Activated naive CD4-positive, alpha-beta T cell treated with anti-CD3 and anti-CD28 coated beads for 36 hours (primary cell): ENCODE measurements at regions of chr20 and their contacts with region 1.

Region 1: GRCh38 chr20:47501483-47502270 is at the start of gene NCOA3:
- DNase-seq: peak; percentile 96
- H3K4me3 Mint-ChIP-seq: peak within 1 kb of the TSS; percentile 97
- H3K27ac Mint-ChIP-seq: peak within 1 kb of the TSS; percentile 95
- H3K4me1 Mint-ChIP-seq: peaks cover 52% of the 10 kb centered on the region
- H3K27me3 Mint-ChIP-seq: no peaks in the 10 kb centered on the region
- total RNA-seq, gene NCOA3: 48.3 to 53.2 TPM

Region 2: DNA sequence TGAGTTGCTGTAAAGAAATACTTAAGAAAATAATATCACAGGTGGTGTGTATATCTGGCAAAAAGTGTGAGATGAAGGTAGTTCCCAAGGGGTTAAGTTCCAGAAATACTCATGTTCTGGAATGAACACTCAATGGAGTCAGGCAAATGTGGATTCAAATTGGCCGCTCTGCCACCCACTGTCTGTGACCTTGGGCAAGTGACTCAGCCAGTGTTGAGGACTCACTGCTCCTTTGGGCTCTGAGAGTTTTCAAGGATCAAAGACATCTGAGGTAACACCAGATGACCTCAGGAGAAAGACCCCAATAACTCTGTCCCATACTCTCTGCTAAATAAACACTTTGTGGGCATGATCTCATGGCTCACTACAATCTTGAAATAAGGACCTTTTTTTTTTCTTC is 666.3 kb before region 1 on chr20:
- CTCF ChIA-PET with region 1: no interaction called
- intact Hi-C with region 1: no loop called
- DNase-seq: no peak
- H3K4me3 Mint-ChIP-seq: no peak overlapping the region
- H3K27ac Mint-ChIP-seq: no peak overlapping the region
- H3K4me1 Mint-ChIP-seq: no peaks in the 10 kb centered on the region
- H3K27me3 Mint-ChIP-seq: peaks cover 10% of the 10 kb centered on the region

Region 3: GRCh38 chr20:47356526-47357295 is 145.0 kb before region 1 on chr20 and contains the start of gene ZMYND8:
- CTCF ChIA-PET with region 1: no interaction called
- intact Hi-C with region 1: loop called (anchors 1 kb)
- DNase-seq: peak; percentile 97
- H3K4me3 Mint-ChIP-seq: peak within 1 kb of the TSS; percentile 92
- H3K27ac Mint-ChIP-seq: peak within 1 kb of the TSS; percentile 99
- H3K4me1 Mint-ChIP-seq: peaks cover 52% of the 10 kb centered on the region
- H3K27me3 Mint-ChIP-seq: no peaks in the 10 kb centered on the region
- total RNA-seq, gene ZMYND8: 30.3 to 33.0 TPM

Region 4: DNA sequence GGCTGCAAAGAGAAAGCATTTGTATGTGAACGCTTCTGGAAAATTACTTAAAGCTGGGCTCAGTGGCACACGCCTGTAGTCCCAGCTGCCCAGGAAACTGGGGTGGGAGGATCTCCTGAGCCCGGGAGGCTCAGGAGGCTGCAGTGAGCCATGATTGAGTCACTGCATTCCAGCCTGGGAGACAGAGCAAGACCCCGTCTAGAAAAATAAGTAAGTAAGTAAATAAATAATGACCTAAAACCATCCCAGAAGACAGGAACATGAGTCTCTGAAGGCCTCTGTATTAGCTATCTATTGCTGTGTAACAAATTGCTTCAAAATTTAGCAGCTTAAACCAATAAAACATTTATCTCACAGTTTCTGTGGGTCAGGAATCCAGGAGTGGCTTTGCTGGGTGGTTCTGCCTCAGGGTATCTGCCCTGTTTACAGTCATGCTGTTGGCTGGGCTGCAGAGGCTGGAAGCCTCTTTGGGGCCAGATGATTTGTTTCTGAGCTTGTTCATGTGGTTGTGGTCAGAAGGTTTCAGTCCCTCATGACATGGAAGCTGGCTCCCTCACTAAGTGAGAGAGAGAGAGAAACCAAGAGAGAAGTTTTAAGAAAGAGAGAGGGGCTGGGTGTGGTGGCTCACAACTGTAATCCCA is 48.4 kb before region 1 on chr20:
- CTCF ChIA-PET with region 1: interaction called, 8 read pairs
- intact Hi-C with region 1: loop called (anchors 1 kb)
- DNase-seq: peak; percentile 62
- H3K4me3 Mint-ChIP-seq: no peak overlapping the region
- H3K27ac Mint-ChIP-seq: peak overlapping the region; percentile 51
- H3K4me1 Mint-ChIP-seq: peaks cover 45% of the 10 kb centered on the region
- H3K27me3 Mint-ChIP-seq: no peaks in the 10 kb centered on the region

Region 5: GRCh38 chr20:47610247-47610944 is 108.7 kb after region 1 on chr20:
- CTCF ChIA-PET with region 1: interaction called, 3 read pairs
- intact Hi-C with region 1: loop called (anchors 1 kb)
- DNase-seq: peak; percentile 97
- H3K4me3 Mint-ChIP-seq: peak overlapping the region; percentile 48
- H3K27ac Mint-ChIP-seq: peak overlapping the region; percentile 96
- H3K4me1 Mint-ChIP-seq: peaks cover 86% of the 10 kb centered on the region
- H3K27me3 Mint-ChIP-seq: no peaks in the 10 kb centered on the region

Region 6: GRCh38 chr20:47772995-47773716 is 271.5 kb after region 1 on chr20:
- CTCF ChIA-PET with region 1: no interaction called
- intact Hi-C with region 1: no loop called
- DNase-seq: no peak
- H3K4me3 Mint-ChIP-seq: no peak overlapping the region
- H3K27ac Mint-ChIP-seq: no peak overlapping the region
- H3K4me1 Mint-ChIP-seq: no peaks in the 10 kb centered on the region
- H3K27me3 Mint-ChIP-seq: no peaks in the 10 kb centered on the region

Region 7: GRCh38 chr20:48760403-48760983 is 1258.8 kb after region 1 on chr20:
- CTCF ChIA-PET with region 1: no interaction called
- intact Hi-C with region 1: loop called (anchors 10 kb)
- DNase-seq: peak; percentile 82
- H3K4me3 Mint-ChIP-seq: peak overlapping the region; percentile 57
- H3K27ac Mint-ChIP-seq: peak overlapping the region; percentile 95
- H3K4me1 Mint-ChIP-seq: peaks cover 58% of the 10 kb centered on the region
- H3K27me3 Mint-ChIP-seq: no peaks in the 10 kb centered on the region